ENCODE measurements at regions of chr3 and their contacts with region 1.

Region 1: GRCh38 chr3:100463002-100463401 is 29.4 kb upstream of the TMEM45A start:
- DNase-seq: no peak
- ATAC-seq: peak; percentile 98
- H3K4me3 Mint-ChIP-seq: no peak overlapping the region
- H3K27ac Mint-ChIP-seq: no peak overlapping the region
- H3K4me1 Mint-ChIP-seq: peaks cover 7% of the 10 kb centered on the region
- H3K27me3 Mint-ChIP-seq: peaks cover 7% of the 10 kb centered on the region
- CTCF ChIP-seq: peak; percentile 64

Region 2: DNA sequence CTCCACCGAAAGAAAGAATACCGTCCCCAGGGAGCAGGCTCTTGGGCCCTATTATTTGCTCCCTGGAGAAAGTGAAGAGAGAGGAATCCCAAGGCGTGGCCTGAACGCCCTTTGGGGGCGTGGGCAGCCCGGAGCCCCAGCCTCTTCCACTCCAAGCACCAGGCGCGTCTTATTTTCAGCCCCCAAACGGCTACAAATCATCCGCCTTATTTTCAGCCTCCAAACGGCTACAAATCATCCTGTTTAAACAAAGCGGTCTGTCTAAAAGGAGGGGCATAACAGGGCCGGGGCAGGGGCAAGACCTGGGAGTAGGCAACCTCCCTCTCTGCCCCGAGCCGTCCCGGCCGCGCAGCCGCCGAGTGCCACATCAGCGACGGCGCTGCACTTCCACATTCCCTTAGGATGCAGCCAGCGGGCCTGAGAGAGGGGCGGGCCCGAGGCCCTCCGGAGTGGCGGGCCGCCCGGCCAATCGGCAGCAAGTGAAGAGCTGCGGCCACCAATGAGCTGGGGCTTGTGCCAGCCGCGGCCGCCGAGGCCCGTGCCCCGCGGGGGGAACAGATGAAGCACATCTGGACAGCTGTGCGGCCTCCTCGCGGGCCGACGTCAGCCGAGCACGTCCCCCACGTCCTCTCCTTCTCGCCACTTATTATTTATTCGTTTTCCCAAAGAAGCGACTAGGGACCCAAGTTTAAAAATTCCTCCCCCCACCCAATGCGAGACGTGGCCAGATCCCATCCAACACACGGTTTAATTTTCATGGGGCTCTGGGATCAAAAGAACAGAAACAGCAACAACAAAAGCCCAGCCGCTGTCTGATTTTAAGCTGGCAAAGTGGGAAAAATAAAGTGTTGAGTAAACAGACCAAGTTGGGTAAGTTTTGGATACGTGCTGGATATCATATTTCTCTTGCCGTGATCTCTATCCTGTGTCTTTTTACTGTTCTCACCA is 29.3 kb after region 1 on chr3 and contains the start of gene TMEM45A:
- CTCF ChIA-PET with region 1: interaction called, 12 read pairs
- POLR2A ChIA-PET with region 1: interaction called, 3 read pairs
- DNase-seq: peak; percentile 98
- ATAC-seq: peak; percentile 99
- H3K4me3 Mint-ChIP-seq: peak within 1 kb of the TSS; percentile 89
- H3K27ac Mint-ChIP-seq: peak within 1 kb of the TSS; percentile 70
- H3K4me1 Mint-ChIP-seq: peaks cover 11% of the 10 kb centered on the region
- H3K27me3 Mint-ChIP-seq: peaks cover 5% of the 10 kb centered on the region
- CTCF ChIP-seq: no peak
- total RNA-seq, gene TMEM45A: 6.6 to 16.0 TPM (median 15.1 TPM) in 3 replicates

Region 3: DNA sequence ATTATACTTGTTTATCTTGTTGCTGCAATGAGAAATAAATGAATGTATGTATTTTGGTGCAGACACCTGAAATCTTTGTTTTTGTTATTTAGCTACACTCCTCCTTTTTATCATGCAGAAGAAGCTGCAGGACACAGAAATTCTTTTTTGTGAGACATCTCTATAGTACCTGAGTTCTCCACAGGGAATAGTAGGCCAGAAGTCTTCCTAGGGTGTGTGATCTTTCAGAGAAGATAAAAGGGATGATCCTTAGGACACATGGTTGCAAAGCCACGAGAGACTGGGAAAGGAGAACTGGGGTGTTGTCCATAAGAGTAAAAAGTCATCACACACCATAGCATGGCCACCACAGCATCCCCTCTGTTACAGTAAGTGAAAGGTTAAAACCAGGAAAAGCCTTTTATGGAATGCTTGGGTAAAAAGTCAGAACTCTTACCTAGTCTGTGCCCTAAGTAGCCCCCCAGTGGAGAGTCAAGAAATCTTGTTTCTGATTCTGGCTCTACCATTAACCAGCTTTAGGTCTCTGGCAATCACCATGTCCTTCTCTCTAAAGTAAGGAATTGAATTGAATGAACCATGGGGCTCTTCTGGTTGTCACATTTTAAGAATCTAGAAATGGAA is 114.5 kb after region 1 on chr3:
- CTCF ChIA-PET with region 1: interaction called, 11 read pairs
- POLR2A ChIA-PET with region 1: interaction called, 4 read pairs
- DNase-seq: no peak
- ATAC-seq: peak; percentile 78
- H3K4me3 Mint-ChIP-seq: no peak overlapping the region
- H3K27ac Mint-ChIP-seq: peak overlapping the region; percentile 34; the same call in 1 of the 2 replicates
- H3K4me1 Mint-ChIP-seq: peaks cover 14% of the 10 kb centered on the region
- H3K27me3 Mint-ChIP-seq: no peaks in the 10 kb centered on the region; the same call in 1 of the 2 replicates
- CTCF ChIP-seq: no peak

Region 4: DNA sequence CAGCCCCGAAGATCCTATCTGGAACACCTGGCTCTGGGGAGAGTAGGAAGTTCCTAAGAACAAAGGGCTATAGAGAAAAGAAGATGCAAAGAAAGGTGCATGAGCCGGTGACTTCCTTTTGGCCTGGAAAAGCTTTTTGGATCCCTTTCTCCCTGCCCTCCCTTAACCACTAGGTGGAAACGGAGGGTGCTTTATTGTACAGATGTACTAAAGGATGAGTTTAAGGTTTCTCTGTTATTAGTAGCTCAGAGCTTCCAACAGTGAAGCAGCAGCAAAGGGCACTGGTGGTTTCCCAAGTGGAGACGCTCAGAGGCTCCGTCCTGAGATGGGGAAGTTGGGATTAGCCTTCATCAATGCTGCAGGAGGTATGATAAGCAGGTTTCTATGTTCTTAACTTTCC is 140.5 kb after region 1 on chr3:
- CTCF ChIA-PET with region 1: interaction called, 43 read pairs
- POLR2A ChIA-PET with region 1: no interaction called
- DNase-seq: no peak
- ATAC-seq: peak; percentile 86
- H3K4me3 Mint-ChIP-seq: no peak overlapping the region
- H3K27ac Mint-ChIP-seq: peak overlapping the region; percentile 63; the same call in 1 of the 2 replicates
- H3K4me1 Mint-ChIP-seq: peaks cover 25% of the 10 kb centered on the region
- H3K27me3 Mint-ChIP-seq: no peaks in the 10 kb centered on the region
- CTCF ChIP-seq: peak; percentile 20; the same call in 1 of the 2 replicates

Region 5: GRCh38 chr3:100708967-100709841 is 246.2 kb after region 1 on chr3 and contains the start of gene TFG:
- CTCF ChIA-PET with region 1: interaction called, 17 read pairs
- POLR2A ChIA-PET with region 1: no interaction called
- DNase-seq: peak; percentile 93
- ATAC-seq: peak; percentile 94
- H3K4me3 Mint-ChIP-seq: peak within 1 kb of the TSS; percentile 91
- H3K27ac Mint-ChIP-seq: peak within 1 kb of the TSS; percentile 97
- H3K4me1 Mint-ChIP-seq: peaks cover 21% of the 10 kb centered on the region
- H3K27me3 Mint-ChIP-seq: peaks cover 50% of the 10 kb centered on the region
- CTCF ChIP-seq: no peak
- total RNA-seq, gene TFG: 64.9 to 68.4 TPM (median 66.9 TPM) in 3 replicates

Region 6: GRCh38 chr3:100796556-100796955 is 333.6 kb after region 1 on chr3:
- CTCF ChIA-PET with region 1: interaction called, 20 read pairs
- POLR2A ChIA-PET with region 1: no interaction called
- DNase-seq: no peak
- ATAC-seq: peak; percentile 58
- H3K4me3 Mint-ChIP-seq: no peak overlapping the region
- H3K27ac Mint-ChIP-seq: no peak overlapping the region
- H3K4me1 Mint-ChIP-seq: peaks cover 5% of the 10 kb centered on the region; the same call in 1 of the 2 replicates
- H3K27me3 Mint-ChIP-seq: no peaks in the 10 kb centered on the region; the same call in 1 of the 2 replicates
- CTCF ChIP-seq: no peak